ENCODE measurements at regions of chr19 and their contacts with region 1.

Region 1: DNA sequence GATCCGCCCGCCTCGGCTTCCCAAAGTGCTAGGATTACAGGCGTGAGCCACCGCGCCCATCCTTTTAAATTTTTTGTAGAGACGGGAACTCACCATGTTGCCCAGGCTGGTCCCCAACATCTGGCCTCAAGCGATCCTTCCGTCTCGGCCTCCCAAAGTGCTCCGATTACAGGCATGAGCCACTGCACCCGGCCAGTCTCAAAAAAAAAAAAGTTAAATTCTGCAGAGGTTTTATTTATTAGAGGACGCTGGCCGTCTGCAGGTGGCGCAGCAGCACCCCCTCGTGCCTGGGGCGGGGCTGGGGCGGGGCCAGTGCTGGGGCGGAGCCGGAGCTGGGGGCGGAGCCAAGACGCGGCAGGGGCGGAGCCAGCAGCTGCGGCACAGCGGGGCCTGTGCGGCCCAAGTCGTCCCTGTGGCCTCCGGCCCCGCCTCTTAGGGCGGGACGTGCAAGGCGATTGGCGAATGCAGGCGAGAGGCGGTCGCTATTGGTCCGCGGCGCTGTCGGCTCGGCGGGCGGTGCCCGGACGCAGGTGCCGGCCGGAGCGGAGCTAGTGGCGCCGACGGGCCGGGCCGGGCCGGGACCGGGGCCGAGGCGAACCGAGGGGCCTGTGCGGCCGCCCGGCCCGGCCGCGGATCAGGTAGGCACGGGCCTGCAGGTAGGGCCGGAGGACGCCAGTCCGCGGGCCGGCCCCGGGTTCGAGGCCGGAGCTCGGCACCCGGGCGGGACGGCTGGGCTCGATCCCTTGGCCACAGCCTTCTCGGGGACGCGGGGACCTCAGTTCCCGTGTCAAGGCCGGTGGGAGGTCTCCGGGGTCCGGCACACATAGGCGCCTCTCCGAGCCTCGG is at the start of gene MARCHF2:
- DNase-seq: peak; percentile 97 to 99 (median 99)
- ATAC-seq: peak; percentile 98 to 99
- H3K4me3 ChIP-seq: peak within 1 kb of the TSS; percentile 89
- H3K27ac ChIP-seq: peak within 1 kb of the TSS; percentile 49
- H3K4me1 ChIP-seq: peaks cover 5% of the 10 kb centered on the region
- H3K27me3 ChIP-seq: no peaks in the 10 kb centered on the region
- total RNA-seq, gene MARCHF2: 94.2 to 106 (median 104) TPM

Region 2: DNA sequence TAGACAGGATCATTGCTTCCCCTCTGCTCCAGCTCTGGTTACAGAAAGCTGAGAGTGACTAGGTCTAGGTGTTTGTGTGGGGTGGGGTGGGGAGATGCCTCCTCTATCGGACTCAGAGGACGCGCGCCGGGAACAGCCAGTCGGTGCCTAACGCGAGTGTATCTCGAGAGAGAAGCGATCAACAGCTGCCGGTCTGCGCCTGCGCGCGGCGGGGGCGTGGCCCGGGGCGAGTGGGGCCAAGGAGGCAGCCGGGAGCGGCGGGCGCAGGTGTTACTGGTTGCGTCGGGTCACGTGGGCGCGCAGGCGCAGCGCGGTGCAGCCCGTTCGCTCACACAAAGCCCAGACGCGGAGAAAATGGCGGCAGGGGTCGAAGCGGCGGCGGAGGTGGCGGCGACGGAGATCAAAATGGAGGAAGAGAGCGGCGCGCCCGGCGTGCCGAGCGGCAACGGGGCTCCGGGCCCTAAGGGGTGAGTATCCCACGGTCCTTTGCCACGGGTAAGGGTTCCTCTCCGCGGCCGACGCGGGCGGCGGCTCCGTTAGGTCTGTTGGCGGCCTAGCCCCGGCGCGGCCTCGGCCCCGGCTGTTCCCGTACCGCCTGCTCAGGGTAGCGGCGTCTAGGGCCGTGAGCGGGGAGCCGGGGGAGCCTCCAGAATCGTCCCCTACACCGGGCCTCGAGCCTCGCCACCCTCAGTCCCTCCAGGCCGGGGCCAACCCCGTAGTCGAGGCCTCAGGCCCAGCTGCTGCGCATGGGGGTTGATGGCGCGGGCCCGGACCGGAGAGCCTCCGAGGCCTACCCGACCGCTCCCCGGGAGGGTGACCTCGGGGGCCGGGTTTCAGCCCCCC is 31.9 kb after region 1 on chr19 and contains the start of gene HNRNPM:
- intact Hi-C with region 1: loop called in 1 of 4 experiments (anchors 2 kb)
- DNase-seq: peak; percentile 100
- ATAC-seq: peak; percentile 98 to 99
- H3K4me3 ChIP-seq: peak within 1 kb of the TSS; percentile 75
- H3K27ac ChIP-seq: peak within 1 kb of the TSS; percentile 73
- H3K4me1 ChIP-seq: peaks cover 5% of the 10 kb centered on the region
- H3K27me3 ChIP-seq: no peaks in the 10 kb centered on the region
- total RNA-seq, gene HNRNPM: 106 to 128 (median 120) TPM

Region 3: GRCh38 chr19:8459520-8460259 is 46.7 kb after region 1 on chr19:
- intact Hi-C with region 1: loop called in 1 of 4 experiments (anchors 5 kb)
- DNase-seq: no peak
- ATAC-seq: peak; percentile 54 to 71
- H3K4me3 ChIP-seq: no peak overlapping the region
- H3K27ac ChIP-seq: peak overlapping the region; percentile 37
- H3K4me1 ChIP-seq: peaks cover 12% of the 10 kb centered on the region
- H3K27me3 ChIP-seq: no peaks in the 10 kb centered on the region

Region 4: GRCh38 chr19:8505680-8506401 is 92.8 kb after region 1 on chr19:
- intact Hi-C with region 1: loop called in 2 of 4 experiments (anchors 5 to 10 kb)
- DNase-seq: peak; percentile 79 to 94 (median 92)
- ATAC-seq: peak; percentile 81 to 89
- H3K4me3 ChIP-seq: peak overlapping the region; percentile 51
- H3K27ac ChIP-seq: no peak overlapping the region
- H3K4me1 ChIP-seq: peaks cover 2% of the 10 kb centered on the region
- H3K27me3 ChIP-seq: no peaks in the 10 kb centered on the region

Region 5: DNA sequence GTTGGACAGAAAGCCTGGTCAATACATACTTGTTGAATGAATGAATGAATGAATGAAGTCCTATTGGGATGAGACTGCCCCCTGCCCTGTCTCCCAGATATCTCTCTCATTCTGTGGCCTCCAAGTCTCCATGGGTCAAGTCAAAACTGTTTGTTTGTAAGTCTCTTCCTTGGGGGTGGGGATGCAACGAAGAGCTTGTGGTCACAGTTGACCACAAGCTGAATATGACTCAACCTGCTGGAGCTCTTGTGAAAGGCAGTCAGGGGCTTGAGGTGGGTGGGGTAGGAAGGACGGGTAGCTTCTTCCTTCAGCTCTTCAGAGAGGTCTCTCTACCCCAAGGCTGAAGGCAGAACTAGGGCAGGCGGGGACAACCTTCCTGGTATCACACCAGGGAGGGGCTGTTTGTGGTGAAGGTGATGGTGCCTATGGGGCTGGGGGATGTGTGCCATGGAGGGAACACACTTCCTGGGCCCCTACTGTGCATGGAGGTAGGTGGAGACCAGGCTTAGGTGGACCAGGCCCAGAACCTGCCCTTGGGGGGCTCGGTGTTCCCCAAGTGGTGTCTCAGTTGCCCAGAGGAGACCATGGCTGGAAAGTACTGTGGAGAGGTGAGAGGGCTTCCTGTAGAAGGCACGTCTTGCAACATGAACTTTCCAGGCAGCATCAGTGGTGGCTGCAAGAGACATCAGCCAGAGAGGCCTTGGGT is 156.2 kb after region 1 on chr19:
- intact Hi-C with region 1: no loop called
- DNase-seq: peak in 2 of 3 donors; percentile 64 to 69
- ATAC-seq: peak; percentile 59 to 73
- H3K4me3 ChIP-seq: no peak overlapping the region
- H3K27ac ChIP-seq: no peak overlapping the region
- H3K4me1 ChIP-seq: no peaks in the 10 kb centered on the region
- H3K27me3 ChIP-seq: no peaks in the 10 kb centered on the region

Measured in right cardiac atrium (tissue), 5 donors.